ENCODE measurements at regions of chr2 and their contacts with region 1.

Region 1: DNA sequence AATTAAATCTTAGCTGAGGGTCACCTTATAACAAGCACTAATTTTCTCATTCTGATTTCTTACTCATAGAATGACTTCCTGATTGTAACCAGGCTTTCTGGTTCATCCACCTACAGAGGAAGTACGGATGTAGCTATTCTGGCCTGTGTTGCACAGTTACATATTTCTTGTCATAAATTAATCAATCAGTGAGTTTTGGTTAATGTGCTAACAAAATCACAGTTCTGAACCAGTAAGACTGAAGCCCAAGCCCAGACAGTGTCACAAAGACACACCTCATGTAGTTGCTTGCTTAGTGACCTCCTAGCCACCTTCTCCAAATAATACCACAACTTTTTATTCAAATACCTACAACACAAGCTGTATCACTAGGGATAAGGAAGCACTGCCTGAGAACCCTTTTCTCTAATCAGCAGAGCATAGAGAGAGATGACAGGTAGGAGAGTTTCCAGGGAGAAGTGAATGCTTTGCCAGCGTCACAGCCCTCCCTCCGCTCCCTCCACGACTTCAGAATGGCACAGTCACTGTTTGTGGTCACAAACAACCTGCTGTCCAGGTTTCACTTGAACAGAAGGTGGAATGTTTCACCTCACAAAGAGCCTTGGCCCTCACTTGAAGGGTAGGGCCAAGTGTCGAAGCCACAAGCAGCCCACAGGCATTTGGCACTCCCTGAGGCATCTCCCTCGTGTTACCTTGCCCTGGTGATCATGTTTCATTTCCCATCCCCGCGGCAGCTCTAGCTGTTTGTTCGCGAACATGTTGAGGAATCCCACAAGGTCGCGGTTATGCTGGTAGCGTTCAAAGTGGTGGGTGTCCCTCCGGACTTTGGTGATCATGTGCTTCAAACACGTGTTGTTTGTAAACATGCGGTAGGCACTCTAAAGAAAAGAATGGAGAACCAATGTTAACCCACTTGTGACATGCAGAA is 120.8 kb upstream of the STK17B start:
- DNase-seq: peak; percentile 89 to 98
- H3K4me3 ChIP-seq: peak overlapping the region; percentile 45; the same call in 1 of the 2 replicates
- H3K27ac ChIP-seq: peak overlapping the region; percentile 100
- H3K4me1 ChIP-seq: peaks cover 58% of the 10 kb centered on the region
- H3K27me3 ChIP-seq: no peaks in the 10 kb centered on the region
- CTCF ChIP-seq: no peak

Region 2: GRCh38 chr2:195520671-195521155 is 771.4 kb before region 1 on chr2:
- CTCF ChIA-PET with region 1: no interaction called
- POLR2A ChIA-PET with region 1: no interaction called
- intact Hi-C with region 1: loop called (anchors 5 kb)
- DNase-seq: peak; percentile 57 to 69
- H3K4me3 ChIP-seq: no peak overlapping the region
- H3K27ac ChIP-seq: no peak overlapping the region
- H3K4me1 ChIP-seq: no peaks in the 10 kb centered on the region
- H3K27me3 ChIP-seq: no peaks in the 10 kb centered on the region
- CTCF ChIP-seq: no peak

Region 3: GRCh38 chr2:196131384-196131937 is 160.7 kb before region 1 on chr2:
- CTCF ChIA-PET with region 1: no interaction called
- POLR2A ChIA-PET with region 1: no interaction called
- intact Hi-C with region 1: loop called (anchors 1 kb)
- DNase-seq: peak; percentile 25 to 47
- H3K4me3 ChIP-seq: no peak overlapping the region
- H3K27ac ChIP-seq: no peak overlapping the region
- H3K4me1 ChIP-seq: no peaks in the 10 kb centered on the region
- H3K27me3 ChIP-seq: no peaks in the 10 kb centered on the region
- CTCF ChIP-seq: peak; percentile 76

Region 4: DNA sequence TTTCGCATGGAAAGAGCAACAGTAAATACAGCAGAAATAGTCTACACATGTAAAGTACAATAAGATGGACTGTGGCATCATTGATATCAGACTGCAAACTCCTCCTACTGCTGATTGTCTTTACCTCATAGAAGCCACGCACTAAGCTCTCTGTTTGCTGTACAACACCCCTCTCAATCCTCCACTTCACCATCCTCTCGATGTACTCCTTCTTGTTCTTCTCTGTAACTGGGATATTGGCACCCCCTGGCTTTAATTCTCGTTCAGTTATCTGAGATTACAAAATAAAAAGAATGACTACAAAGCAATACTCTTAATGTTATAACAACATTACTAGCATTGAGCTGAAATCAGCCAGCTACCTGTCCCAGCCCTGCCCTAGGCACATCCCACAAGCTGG is 71.5 kb before region 1 on chr2:
- CTCF ChIA-PET with region 1: no interaction called
- POLR2A ChIA-PET with region 1: no interaction called
- intact Hi-C with region 1: no loop called
- DNase-seq: no peak
- H3K4me3 ChIP-seq: no peak overlapping the region
- H3K27ac ChIP-seq: no peak overlapping the region
- H3K4me1 ChIP-seq: no peaks in the 10 kb centered on the region
- H3K27me3 ChIP-seq: no peaks in the 10 kb centered on the region
- CTCF ChIP-seq: no peak

Region 5: DNA sequence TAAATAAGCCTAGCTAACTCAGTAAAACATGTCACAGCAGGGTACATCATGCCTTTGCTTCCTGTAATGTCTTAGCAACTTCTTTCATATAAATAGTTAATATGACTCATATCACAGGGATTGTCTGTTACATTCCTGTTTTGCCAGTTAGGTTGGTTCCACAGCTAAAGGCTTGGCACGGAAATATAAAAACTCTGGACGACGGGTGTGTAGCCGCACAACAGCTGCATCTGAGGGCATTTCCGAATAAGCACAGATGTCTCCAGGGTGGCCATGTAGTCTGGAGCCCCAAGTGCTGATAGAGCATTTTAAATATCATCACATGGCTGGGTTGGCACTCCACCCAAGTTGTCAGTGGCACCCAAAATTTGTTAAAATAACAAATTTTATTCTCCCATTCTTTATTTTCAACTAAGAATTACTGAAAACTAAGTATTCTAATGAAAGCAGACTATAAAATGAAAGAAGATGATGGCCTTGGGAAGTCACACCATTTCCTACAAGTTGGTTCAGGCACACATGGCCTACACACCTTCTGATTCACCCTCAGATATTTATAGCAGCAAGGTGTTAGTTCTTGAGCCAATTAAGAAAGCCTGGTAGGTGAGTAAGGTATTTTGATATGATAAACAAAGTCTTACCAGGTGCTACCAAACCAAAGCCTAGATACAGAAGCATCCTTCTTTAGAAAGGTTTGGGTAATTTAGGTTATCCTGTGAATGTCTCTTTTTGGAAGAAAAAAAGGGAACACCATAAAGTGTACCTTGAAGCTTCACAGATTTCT is 58.9 kb before region 1 on chr2:
- CTCF ChIA-PET with region 1: no interaction called
- POLR2A ChIA-PET with region 1: no interaction called
- intact Hi-C with region 1: loop called (anchors 1 kb)
- DNase-seq: peak; percentile 51 to 90
- H3K4me3 ChIP-seq: peak overlapping the region; percentile 23; the same call in 1 of the 2 replicates
- H3K27ac ChIP-seq: peak overlapping the region; percentile 92
- H3K4me1 ChIP-seq: peaks cover 37% of the 10 kb centered on the region
- H3K27me3 ChIP-seq: no peaks in the 10 kb centered on the region
- CTCF ChIP-seq: no peak

Region 6: GRCh38 chr2:196337208-196337953 is 45.2 kb after region 1 on chr2:
- CTCF ChIA-PET with region 1: no interaction called
- POLR2A ChIA-PET with region 1: no interaction called
- intact Hi-C with region 1: loop called (anchors 2 kb)
- DNase-seq: no peak
- H3K4me3 ChIP-seq: no peak overlapping the region
- H3K27ac ChIP-seq: no peak overlapping the region
- H3K4me1 ChIP-seq: peaks cover 21% of the 10 kb centered on the region
- H3K27me3 ChIP-seq: no peaks in the 10 kb centered on the region
- CTCF ChIP-seq: peak; percentile 70

Region 7: GRCh38 chr2:196639180-196640030 is 347.3 kb after region 1 on chr2 and contains the start of gene CCDC150:
- CTCF ChIA-PET with region 1: no interaction called
- POLR2A ChIA-PET with region 1: no interaction called
- intact Hi-C with region 1: no loop called
- DNase-seq: peak; percentile 81 to 90
- H3K4me3 ChIP-seq: peak within 1 kb of the TSS; percentile 91
- H3K27ac ChIP-seq: no peak within 1 kb of the TSS
- H3K4me1 ChIP-seq: peaks cover 8% of the 10 kb centered on the region
- H3K27me3 ChIP-seq: no peaks in the 10 kb centered on the region
- CTCF ChIP-seq: no peak; the same call in 1 of the 2 replicates
- total RNA-seq, gene CCDC150: 9.8 and 17.8 TPM in 2 replicates

Measured in PC-9 (cell line).